Lower leg skin (tissue), 4 donors: ENCODE measurements at regions of chr7 and their contacts with region 1.

Region 1: DNA sequence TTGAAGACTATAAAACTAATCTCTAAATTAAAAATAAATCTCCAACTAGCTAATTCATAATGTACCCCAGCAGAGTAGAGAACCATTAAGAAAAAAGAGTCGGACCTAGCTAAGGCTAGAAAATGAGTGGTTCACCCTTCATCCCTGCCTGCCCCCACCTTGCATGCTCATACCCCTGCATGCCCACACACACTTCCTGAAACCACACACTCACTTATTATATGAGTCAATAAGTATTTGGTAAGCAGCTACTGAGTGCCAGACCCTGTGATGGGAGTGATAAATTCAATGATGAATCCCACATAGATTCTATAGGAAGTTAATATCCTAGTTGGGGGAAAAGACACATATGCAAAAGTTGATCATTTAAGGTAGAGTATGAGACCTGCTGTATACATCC is 152.9 kb upstream of the INHBA start:
- DNase-seq: no peak
- H3K4me3 ChIP-seq: no peak overlapping the region
- CTCF ChIP-seq: no peak
- POLR2A ChIP-seq: no peak

Region 2: DNA sequence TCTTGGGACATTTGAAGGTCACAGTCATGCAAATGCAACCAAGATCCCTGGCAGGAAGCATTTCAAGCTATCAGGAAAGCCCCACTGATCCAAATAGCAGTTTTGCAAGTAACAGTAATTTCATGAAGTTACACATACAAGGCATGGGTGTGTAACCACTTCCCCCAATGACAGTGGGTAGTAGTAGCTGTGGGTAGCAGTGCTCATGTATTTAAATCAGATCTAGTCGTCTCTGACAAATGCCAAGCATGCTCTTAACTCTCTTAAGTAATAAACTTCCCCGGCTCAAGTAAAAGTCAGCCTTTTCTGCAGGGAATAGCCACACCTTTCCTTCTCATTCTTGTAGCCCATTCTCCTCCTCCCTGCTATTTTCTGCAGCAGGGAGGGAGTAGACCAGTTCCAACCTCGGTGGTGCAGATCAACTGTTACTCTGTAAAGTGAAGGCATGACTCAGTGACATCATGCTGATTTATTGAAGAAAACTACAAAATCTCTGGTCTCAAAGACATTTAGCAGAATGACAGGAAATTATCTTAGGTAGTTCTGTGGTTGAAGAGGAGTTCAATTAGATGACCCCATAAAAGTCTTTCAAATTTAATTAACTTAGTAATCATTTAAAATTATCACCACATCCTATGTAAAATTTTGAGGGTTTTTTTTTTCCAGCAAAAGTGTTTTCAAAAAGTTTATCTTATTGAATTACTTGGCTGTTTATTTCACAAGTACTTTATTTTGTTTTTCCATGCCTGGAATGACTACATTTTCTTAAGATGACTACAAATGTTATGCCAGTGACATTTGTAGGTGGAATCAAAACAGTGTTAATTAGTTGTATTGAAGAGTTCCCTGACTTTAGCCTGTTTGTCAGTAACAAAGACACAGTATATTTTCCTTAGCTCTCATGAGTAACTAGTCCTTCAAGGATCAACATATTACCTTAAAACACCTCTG is 721.2 kb before region 1 on chr7:
- intact Hi-C with region 1: loop called (anchors 5 kb)
- DNase-seq: no peak
- H3K4me3 ChIP-seq: no peak overlapping the region
- CTCF ChIP-seq: no peak
- POLR2A ChIP-seq: no peak

Region 3: DNA sequence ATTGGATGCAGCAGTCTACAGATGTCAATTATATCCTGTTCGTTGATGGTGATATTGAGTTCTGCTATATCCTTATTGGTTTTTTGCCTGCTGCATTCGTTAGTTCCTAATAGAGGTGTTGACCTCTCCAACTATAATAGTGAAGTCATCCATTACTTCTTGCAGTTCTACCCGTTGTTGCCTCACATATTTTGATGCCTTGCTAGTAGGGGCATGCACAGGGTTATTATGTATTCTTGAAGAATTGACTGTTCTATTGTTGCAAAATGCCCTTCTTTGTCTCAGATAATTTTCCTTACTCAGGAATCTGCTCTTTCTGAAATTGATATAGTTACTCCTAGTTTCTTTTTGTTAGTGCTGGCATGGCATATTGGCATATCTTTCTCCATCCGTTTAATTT is 12.8 kb before region 1 on chr7:
- intact Hi-C with region 1: no loop called
- DNase-seq: no peak
- H3K4me3 ChIP-seq: no peak overlapping the region
- CTCF ChIP-seq: no peak
- POLR2A ChIP-seq: no peak